ENCODE measurements at regions of chr2 and their contacts with region 1.

Region 1: DNA sequence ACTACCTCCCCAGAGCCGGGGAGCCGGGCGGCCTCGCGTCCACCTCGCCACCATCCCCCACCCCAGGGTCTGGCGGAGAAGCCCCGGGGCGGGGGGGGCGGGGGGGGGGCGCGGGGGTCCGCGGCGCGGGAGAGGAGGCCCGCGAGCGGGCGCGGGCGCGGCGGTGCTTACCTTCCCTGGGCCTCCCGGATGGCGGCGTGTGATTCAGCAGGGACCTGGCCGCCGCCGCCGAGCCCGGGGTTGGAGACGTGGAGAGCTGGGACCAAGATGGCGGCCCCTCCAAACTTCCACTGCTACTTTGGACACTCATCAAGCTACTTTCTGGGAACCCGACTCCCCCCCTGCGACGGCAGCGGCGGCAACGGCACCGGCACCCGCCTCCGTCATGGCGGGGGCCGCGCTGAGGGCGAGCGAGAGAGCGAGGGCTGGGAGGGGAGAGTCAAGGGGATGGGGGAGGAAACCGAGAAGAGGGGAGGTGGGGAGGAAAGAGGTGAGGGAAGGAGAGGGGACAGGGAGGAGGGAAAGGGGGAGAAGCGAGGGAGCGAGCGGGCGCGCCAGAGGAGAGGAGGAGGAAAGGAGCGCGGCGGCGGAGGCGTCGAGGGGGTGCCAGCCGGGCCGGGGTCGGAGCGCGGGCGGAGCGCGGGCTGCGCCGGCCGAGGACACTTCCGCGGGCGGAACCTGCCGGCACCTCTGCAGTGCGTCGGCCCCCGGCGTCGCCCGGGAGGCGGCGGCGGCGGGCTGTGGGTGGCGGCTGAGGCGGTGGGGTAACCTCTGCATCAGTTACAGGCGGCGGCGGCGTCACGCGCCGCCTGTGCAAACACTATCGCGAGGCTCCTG is at the start of gene TLK1:
- DNase-seq: peak; percentile 67
- CTCF ChIP-seq: peak; percentile 27

Region 2: GRCh38 chr2:170598067-170598395 is 562.3 kb before region 1 on chr2:
- in situ Hi-C with region 1: no loop called
- DNase-seq: no peak
- CTCF ChIP-seq: no peak

Region 3: GRCh38 chr2:170815746-170816503 is 344.4 kb before region 1 on chr2:
- in situ Hi-C with region 1: no loop called
- DNase-seq: peak; percentile 85
- CTCF ChIP-seq: peak; percentile 63

Region 4: GRCh38 chr2:171319164-171319810 is 158.9 kb after region 1 on chr2:
- in situ Hi-C with region 1: loop called (anchors 10 kb)
- DNase-seq: peak; percentile 42
- CTCF ChIP-seq: no peak

Region 5: DNA sequence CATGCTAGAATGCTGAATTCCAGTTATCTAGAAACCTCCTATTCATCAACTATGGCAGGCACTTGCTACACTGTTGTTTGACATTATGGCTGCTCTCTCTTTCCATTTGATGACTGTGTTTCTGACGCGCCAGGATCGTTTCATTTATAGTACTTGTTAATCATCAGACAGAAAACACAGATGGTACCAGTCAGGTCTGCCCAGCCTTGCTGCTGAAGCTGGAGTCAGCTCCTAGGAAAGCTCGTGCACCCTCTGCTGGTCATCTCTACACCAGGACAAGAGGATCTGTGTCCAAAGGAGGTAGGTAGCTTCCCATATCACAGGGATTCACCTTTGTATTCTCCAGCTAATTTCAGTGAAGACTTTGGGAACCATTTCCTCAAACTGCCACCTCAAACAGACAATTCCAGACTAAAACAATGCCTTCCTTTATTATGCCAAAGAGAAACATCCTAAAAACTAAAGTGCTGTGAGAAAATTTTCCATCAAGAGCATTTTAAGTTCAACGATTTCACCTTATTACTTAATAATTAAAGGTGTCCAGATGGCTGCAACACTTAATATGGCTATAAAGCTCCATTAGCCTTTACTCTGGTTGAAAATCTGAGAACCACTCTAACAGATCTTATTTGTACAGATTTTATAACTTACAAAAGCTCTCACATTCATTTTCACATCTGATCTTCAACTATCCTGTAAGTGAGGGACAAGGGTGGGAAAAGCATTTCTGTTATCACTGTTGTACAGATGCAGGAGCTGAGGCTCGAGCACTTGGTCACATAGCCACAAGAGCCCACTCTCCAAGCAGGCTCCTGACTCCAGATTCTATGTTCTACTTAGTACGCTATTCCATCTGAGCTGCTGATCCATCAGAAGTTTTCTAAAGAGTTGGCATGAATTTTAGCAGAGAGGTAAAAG is 255.9 kb after region 1 on chr2:
- in situ Hi-C with region 1: loop called (anchors 5 kb)
- DNase-seq: peak; percentile 66
- CTCF ChIP-seq: peak; percentile 74

Measured in GM13976 (cell line).